Panc1 (cell line): ENCODE measurements at regions of chr19 and their contacts with region 1.

Region 1: DNA sequence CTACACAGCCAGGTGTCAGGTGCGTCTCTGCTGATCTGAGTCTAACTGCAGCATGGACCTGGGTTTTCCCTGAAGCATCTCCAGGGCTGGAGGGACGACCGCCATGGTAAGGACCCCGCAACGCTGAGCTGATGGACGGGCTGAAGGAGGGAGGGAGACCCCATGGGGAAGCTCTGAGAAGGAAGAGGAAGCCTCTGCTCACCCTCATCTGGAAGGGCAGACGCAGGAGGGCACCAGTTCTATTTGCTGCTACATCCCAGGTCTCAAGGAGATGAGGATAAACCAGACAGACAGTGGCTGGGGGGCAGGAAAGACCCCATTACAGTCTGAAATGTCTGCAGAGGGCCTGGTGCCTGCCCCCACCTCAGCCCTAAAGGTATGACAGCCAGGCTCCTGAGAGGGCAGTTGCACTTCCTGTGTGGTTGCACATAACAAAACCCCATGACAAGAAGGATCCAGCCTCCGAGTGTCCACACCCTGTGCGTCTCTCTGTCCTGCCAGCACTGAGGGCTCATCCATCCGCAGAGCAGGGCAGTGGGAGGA is at the start of gene LILRA2:
- DNase-seq: no peak
- ATAC-seq: peak; percentile 60; the same call in 1 of the 2 replicates
- H3K4me3 ChIP-seq: no peak within 1 kb of the TSS
- H3K27ac ChIP-seq: no peak within 1 kb of the TSS
- H3K4me1 ChIP-seq: no peaks in the 10 kb centered on the region
- H3K27me3 ChIP-seq: peaks cover 32% of the 10 kb centered on the region
- CTCF ChIP-seq: no peak
- total RNA-seq, gene LILRA2: not detected

Region 2: DNA sequence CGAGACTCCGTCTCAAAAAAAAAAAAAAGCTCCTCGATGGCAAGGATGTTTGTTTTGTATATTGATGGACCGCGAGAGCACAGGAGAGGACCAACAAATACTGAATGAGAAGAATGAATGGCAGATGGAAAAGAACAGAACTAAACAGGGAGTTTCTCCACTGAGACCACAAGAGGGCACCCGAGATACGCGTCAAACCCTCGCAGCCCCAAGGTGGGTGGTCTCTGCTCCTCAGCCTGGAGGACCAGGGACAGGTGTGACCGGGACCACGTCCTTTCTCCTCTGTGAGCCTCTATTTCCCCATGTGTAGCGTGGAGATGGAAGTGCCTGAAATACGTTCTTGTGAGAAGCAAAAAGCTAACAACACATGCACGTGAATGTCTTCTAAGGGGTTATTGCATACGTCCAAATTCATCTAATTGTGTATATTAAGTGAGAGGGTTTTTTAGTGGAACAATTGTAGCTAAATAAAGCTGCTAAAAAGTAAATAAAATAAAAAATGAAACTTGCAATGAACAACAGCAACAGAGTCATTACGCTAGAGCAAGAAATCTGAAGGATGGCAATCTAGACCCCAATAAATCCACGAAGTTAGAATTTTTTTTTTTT is 92.0 kb before region 1 on chr19:
- CTCF ChIA-PET with region 1: no interaction called
- POLR2A ChIA-PET with region 1: no interaction called
- in situ Hi-C with region 1: no loop called
- intact Hi-C with region 1: no loop called
- DNase-seq: no peak
- ATAC-seq: peak; percentile 65
- H3K4me3 ChIP-seq: peak overlapping the region in 1 of 2 experiments; percentile 21; a peak in 1 of 4 replicates
- H3K27ac ChIP-seq: no peak overlapping the region
- H3K4me1 ChIP-seq: no peaks in the 10 kb centered on the region
- H3K27me3 ChIP-seq: no peaks in the 10 kb centered on the region
- CTCF ChIP-seq: peak; percentile 94

Region 3: GRCh38 chr19:54561840-54562239 is 11.6 kb before region 1 on chr19:
- CTCF ChIA-PET with region 1: no interaction called
- POLR2A ChIA-PET with region 1: no interaction called
- in situ Hi-C with region 1: no loop called
- intact Hi-C with region 1: no loop called
- DNase-seq: no peak
- ATAC-seq: peak; percentile 53; the same call in 1 of the 2 replicates
- H3K4me3 ChIP-seq: peak overlapping the region; percentile 28 to 47
- H3K27ac ChIP-seq: no peak overlapping the region
- H3K4me1 ChIP-seq: no peaks in the 10 kb centered on the region
- H3K27me3 ChIP-seq: peaks cover 20% of the 10 kb centered on the region
- CTCF ChIP-seq: no peak

Region 4: DNA sequence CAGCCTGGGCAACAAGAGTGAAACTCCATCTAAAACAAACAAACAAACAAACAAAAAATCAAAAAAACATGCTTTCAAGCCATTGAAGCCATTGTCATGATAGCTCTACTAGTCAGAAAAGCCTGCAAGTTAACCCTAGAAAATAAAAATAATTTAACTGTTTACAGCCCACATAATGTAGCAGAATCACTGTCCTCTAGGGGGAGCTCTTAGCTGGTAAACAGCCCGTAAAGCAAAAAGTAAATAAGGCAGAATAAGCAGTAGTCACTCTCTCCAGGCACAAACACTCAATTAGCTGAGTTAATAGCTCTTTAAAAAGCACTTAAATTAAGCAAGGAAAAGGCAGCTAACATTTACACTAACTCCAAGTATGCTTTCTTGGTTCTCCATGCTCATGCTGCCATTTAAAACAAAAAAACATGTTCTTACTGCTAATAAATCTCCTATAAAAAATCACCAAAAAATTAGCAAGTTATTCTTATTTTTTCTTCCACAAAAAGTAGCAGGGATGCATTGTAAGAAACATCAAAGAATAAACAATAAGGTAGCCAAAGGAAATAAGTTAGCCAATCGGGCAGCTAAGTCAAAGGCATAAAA is 100.7 kb after region 1 on chr19:
- CTCF ChIA-PET with region 1: no interaction called
- POLR2A ChIA-PET with region 1: no interaction called
- in situ Hi-C with region 1: loop called (anchors 10 kb)
- intact Hi-C with region 1: no loop called
- DNase-seq: peak; percentile 30
- ATAC-seq: peak; percentile 85
- H3K4me3 ChIP-seq: no peak overlapping the region
- H3K27ac ChIP-seq: no peak overlapping the region
- H3K4me1 ChIP-seq: no peaks in the 10 kb centered on the region
- H3K27me3 ChIP-seq: peaks cover 25% of the 10 kb centered on the region
- CTCF ChIP-seq: peak; percentile 92

Region 5: GRCh38 chr19:54937926-54938325 is 364.5 kb after region 1 on chr19:
- CTCF ChIA-PET with region 1: no interaction called
- POLR2A ChIA-PET with region 1: interaction called, 10 read pairs
- in situ Hi-C with region 1: no loop called
- intact Hi-C with region 1: no loop called
- DNase-seq: no peak
- ATAC-seq: no peak
- H3K4me3 ChIP-seq: no peak overlapping the region
- H3K27ac ChIP-seq: no peak overlapping the region
- H3K4me1 ChIP-seq: no peaks in the 10 kb centered on the region
- H3K27me3 ChIP-seq: no peaks in the 10 kb centered on the region
- CTCF ChIP-seq: no peak